CD8-positive, alpha-beta T cell (primary cell): ENCODE measurements at regions of chr3 and their contacts with region 1.

Region 1: DNA sequence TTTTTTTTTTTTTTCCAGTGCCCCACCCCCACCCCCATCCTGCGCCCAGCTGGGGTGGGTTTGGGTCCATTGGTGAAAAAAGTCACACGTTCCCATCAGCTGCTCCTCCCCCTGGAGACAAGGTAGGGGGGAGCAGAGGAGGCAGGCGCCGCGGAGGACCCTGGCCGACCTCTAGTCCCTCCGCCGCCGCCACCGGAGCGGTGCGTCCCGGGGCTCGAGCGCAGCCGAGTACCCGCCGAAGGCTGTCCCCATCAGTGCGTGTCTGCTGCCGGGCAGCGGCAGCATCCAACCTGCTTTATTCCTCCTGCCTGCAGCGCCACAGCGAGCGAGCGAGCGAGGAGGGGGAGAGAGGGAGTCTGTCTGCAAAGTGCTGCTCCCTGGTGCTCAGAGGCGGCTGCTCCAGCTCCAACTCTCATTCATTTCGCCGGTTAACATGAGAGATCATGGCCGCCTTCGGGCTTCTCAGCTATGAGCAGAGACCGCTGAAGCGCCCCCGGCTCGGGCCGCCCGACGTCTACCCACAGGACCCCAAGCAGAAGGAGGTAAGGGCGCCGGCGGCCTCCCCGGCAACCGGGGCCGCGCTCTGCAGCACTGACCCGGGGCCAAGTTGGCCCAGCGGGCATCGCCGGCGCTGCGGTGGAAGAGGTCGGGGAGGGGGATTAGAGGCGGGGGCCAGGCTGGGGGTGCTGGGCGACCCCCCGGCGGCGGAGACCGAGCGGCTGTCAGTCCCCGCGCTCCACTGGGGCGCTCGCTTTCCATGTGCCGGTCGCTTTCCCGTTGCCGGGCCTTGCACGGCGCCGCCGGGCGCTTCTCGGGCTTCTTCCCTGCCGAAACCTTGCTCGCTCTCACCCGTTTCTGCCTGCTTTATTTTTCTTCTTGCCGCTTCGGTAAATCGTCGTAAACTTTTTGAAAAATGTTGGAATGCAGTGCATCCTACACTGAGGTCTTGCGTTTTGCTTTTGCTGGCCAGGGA is 1.3 kb downstream of the MED12L start:
- DNase-seq: peak; percentile 35 to 80 (median 67)
- ATAC-seq: peak; percentile 90
- H3K4me3 ChIP-seq: peak overlapping the region; percentile 39 to 73
- H3K4me3 Mint-ChIP-seq: peak overlapping the region; percentile 90
- H3K27ac ChIP-seq: no peak overlapping the region
- H3K27ac Mint-ChIP-seq: no peak overlapping the region
- H3K4me1 ChIP-seq: peaks cover 9% of the 10 kb centered on the region
- H3K4me1 Mint-ChIP-seq: peaks cover 15% of the 10 kb centered on the region
- H3K27me3 ChIP-seq: peaks cover 0 to 6% of the 10 kb centered on the region in 2 experiments
- H3K27me3 Mint-ChIP-seq: peaks cover 39% of the 10 kb centered on the region
- CTCF ChIP-seq: no peak

Region 2: DNA sequence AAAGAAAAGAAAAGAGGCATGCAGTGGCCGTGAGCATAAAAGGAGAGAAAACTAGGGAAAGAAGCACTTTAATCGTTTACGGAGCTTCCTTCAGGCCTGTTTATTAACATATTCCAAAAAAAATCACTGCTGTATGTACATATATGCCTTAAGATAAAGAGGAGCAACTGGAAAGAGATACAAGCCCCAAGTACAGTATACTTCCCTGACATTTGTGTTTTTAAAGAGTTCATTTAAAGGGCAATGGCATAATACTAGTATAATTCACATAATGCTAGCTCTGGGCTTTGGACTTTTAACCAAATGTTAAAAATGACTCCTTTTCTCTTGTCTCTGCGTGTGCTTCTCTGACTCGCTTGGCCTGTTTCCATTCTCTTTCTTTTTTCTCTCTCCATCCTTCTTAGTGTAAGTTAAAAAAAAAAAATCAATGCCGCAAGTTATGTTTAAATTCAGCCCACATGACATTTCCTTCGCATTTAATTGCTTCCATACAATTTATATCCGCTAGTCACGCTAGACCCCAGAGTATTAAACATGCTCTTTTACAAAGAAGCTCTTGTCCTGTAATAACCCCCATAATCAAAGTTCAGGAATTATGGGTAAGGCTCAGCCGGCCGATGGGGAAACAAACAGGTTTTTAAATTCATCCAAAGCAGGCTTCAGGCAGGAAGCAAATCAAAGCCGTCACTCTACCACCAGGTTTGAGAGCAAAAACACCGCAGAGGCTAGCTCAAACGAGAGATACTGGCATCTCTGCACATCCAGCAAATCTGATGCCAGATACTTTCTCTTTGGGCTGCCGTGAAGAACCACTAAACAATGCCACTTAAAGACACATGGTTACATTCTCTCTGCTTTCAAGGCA is 1448.3 kb before region 1 on chr3:
- CTCF ChIA-PET with region 1: no interaction called
- POLR2A ChIA-PET with region 1: no interaction called
- intact Hi-C with region 1: no loop called
- DNase-seq: no peak
- ATAC-seq: no peak
- H3K4me3 ChIP-seq: no peak overlapping the region
- H3K4me3 Mint-ChIP-seq: no peak overlapping the region
- H3K27ac ChIP-seq: no peak overlapping the region
- H3K27ac Mint-ChIP-seq: no peak overlapping the region
- H3K4me1 ChIP-seq: no peaks in the 10 kb centered on the region
- H3K4me1 Mint-ChIP-seq: no peaks in the 10 kb centered on the region
- H3K27me3 ChIP-seq: peaks cover 0 to 5% of the 10 kb centered on the region in 2 experiments
- H3K27me3 Mint-ChIP-seq: peaks cover 14% of the 10 kb centered on the region
- CTCF ChIP-seq: no peak

Region 3: DNA sequence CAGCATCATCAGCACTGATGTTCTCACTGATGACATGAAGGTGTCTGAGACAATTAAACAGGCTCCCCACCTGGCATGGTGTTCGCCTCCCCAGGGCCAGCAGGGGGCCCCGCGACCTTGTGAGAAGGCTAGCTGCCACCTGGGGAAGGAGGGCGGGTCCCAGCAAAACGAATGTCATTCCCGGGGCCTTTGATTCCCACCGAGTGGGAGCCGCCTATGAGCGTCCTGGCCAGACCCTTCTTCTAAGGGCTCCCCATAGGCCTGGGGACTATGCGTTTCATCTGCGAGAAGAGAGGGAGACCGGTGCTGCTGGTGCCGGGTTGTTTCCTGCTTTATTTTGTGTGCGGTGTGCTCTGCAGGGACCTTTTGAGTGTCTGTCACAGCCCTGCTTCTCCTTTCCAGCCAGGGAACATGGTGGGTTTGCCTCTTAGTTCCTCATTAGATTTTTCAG is 161.0 kb before region 1 on chr3:
- CTCF ChIA-PET with region 1: no interaction called
- POLR2A ChIA-PET with region 1: no interaction called
- intact Hi-C with region 1: loop called in 1 of 2 experiments (anchors 5 kb)
- DNase-seq: peak; percentile 8 to 63 (median 51)
- ATAC-seq: peak; percentile 81
- H3K4me3 ChIP-seq: no peak overlapping the region
- H3K4me3 Mint-ChIP-seq: peak overlapping the region; percentile 55
- H3K27ac ChIP-seq: no peak overlapping the region
- H3K27ac Mint-ChIP-seq: no peak overlapping the region
- H3K4me1 ChIP-seq: no peaks in the 10 kb centered on the region
- H3K4me1 Mint-ChIP-seq: peaks cover 6% of the 10 kb centered on the region
- H3K27me3 ChIP-seq: no peaks in the 10 kb centered on the region
- H3K27me3 Mint-ChIP-seq: peaks cover 14% of the 10 kb centered on the region
- CTCF ChIP-seq: peak; percentile 60